PC-9 (cell line): ENCODE measurements at regions of chr4 and their contacts with region 1.

Region 1: DNA sequence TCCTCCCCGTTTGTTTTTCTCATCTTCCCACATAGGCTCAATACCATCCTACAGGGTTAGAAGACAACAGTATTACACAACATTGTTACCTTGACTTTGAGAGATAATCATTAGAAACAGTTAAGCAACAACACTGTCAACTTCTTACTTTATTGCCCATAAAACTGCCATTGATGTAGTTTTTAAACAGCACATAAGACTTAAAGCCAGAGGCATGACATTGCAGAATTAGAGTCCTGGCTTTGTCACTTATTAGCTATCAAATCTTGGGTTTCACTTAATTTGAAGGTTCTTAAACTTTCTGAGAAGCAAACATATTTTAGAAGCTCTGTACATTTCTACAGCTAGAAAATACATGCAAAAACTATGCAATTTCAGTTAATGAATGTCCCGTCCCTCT is 41.8 kb downstream of the EIF4E start:
- DNase-seq: no peak
- H3K4me3 ChIP-seq: no peak overlapping the region
- H3K27ac ChIP-seq: no peak overlapping the region
- H3K4me1 ChIP-seq: no peaks in the 10 kb centered on the region
- H3K27me3 ChIP-seq: no peaks in the 10 kb centered on the region
- CTCF ChIP-seq: no peak

Region 2: DNA sequence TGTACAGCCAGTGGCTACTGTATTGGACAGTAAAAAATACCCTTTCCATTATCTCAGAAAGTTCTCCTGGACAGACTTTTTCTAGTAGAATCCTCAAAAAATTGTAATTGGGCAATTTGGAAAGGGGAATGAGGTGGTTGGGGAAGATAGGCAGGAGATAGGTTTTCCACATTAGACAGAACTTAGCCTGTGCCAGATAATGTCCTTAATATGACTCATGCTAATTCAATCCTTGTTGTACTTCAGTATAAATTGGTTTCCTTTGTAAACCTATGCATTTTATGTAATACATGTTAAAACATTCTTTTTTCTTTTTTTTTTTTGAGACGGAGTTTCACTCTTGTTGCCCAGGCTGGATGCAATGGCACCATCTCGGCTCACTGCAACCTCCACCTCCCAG is 32.9 kb after region 1 on chr4:
- CTCF ChIA-PET with region 1: interaction called, 12 read pairs
- POLR2A ChIA-PET with region 1: no interaction called
- intact Hi-C with region 1: no loop called
- DNase-seq: no peak
- H3K4me3 ChIP-seq: no peak overlapping the region
- H3K27ac ChIP-seq: no peak overlapping the region
- H3K4me1 ChIP-seq: no peaks in the 10 kb centered on the region
- H3K27me3 ChIP-seq: no peaks in the 10 kb centered on the region
- CTCF ChIP-seq: no peak